ENCODE measurements at regions of chr16 and their contacts with region 1.

Region 1: GRCh38 chr16:12362482-12363458 is 386.2 kb downstream of the SNX29 start:
- DNase-seq: no peak
- ATAC-seq: no peak
- H3K4me3 ChIP-seq: no peak overlapping the region
- H3K4me3 Mint-ChIP-seq: no peak overlapping the region
- H3K27ac ChIP-seq: no peak overlapping the region
- H3K27ac Mint-ChIP-seq: no peak overlapping the region
- H3K4me1 ChIP-seq: no peaks in the 10 kb centered on the region
- H3K4me1 Mint-ChIP-seq: no peaks in the 10 kb centered on the region
- H3K27me3 ChIP-seq: no peaks in the 10 kb centered on the region
- H3K27me3 Mint-ChIP-seq: no peaks in the 10 kb centered on the region
- CTCF ChIP-seq: no peak

Region 2: GRCh38 chr16:12160815-12161550 is 201.8 kb before region 1 on chr16:
- CTCF ChIA-PET with region 1: no interaction called
- POLR2A ChIA-PET with region 1: no interaction called
- intact Hi-C with region 1: loop called in 1 of 2 experiments (anchors 10 kb)
- DNase-seq: no peak
- ATAC-seq: no peak
- H3K4me3 ChIP-seq: no peak overlapping the region
- H3K4me3 Mint-ChIP-seq: no peak overlapping the region
- H3K27ac ChIP-seq: no peak overlapping the region
- H3K27ac Mint-ChIP-seq: no peak overlapping the region
- H3K4me1 ChIP-seq: no peaks in the 10 kb centered on the region
- H3K4me1 Mint-ChIP-seq: peaks cover 1% of the 10 kb centered on the region
- H3K27me3 ChIP-seq: no peaks in the 10 kb centered on the region
- H3K27me3 Mint-ChIP-seq: no peaks in the 10 kb centered on the region
- CTCF ChIP-seq: no peak

Region 3: DNA sequence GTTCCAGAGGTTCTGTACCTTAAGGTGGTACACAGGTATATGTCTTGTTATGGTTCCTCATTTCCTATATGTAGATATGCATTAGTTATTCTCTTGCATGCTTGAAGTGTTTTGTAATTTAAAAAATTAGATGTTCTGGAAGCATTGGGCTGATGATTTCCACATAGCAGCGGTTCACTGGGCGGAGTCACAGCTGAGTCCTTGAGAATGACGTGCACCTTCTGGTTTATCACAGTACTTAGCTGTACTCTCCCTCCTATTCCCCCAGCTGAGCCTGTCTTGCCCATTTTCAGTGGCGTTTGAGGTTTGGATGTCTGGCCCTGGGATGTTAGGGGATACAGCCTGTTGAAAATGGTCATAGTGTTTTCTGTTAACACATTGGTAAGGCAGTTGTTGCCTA is 59.1 kb before region 1 on chr16:
- CTCF ChIA-PET with region 1: no interaction called
- POLR2A ChIA-PET with region 1: no interaction called
- intact Hi-C with region 1: loop called in 1 of 2 experiments (anchors 10 kb)
- DNase-seq: no peak
- ATAC-seq: no peak
- H3K4me3 ChIP-seq: no peak overlapping the region
- H3K4me3 Mint-ChIP-seq: no peak overlapping the region
- H3K27ac ChIP-seq: no peak overlapping the region
- H3K27ac Mint-ChIP-seq: no peak overlapping the region
- H3K4me1 ChIP-seq: no peaks in the 10 kb centered on the region
- H3K4me1 Mint-ChIP-seq: no peaks in the 10 kb centered on the region
- H3K27me3 ChIP-seq: no peaks in the 10 kb centered on the region
- H3K27me3 Mint-ChIP-seq: no peaks in the 10 kb centered on the region
- CTCF ChIP-seq: no peak